H1 (cell line): ENCODE measurements at regions of chr15 and their contacts with region 1.

Region 1: DNA sequence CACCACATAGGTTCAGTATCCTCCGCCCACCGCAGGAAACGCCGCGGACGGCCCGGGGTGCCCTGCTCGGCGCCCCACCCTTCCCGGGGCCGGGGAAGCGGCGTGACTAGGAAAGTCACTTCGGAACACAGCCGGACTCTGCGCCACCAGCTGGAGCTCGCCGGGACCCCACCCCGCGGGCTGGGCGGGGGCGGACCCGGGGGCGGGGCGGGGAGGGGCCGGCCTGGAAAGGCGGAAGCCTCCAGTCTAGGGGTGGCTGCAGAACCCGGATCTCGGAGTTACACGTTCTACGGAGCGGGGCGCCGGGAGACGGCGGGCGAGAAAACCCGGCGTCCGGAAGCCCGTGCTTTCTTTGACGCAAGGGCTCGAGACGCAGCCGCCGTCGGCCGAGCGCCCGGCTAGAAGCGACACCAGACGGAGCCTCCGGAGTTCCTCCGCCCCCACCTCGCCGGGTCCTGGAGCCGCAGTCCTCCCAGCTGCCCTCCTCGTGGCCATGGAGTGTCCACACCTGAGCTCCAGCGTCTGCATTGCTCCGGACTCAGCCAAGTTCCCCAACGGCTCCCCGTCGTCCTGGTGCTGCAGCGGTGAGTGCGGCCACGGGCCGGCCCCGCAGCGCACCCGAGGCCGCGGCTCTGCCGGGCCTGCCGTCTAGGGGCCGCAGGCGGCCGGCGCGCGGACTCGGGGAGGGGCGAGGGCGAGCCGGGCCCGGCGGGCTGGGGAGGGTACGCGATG is at the start of gene USP3:
- DNase-seq: peak; percentile 72 to 98
- H3K4me3 ChIP-seq: peak within 1 kb of the TSS; percentile 53 to 74 (median 62)
- H3K27ac ChIP-seq: peak within 1 kb of the TSS; percentile 35; the same call in 1 of the 2 replicates
- H3K4me1 ChIP-seq: peaks cover 7 to 16% (median 12%) of the 10 kb centered on the region in 4 experiments
- H3K27me3 ChIP-seq: peaks cover 26 to 77% (median 62%) of the 10 kb centered on the region in 4 experiments
- CTCF ChIP-seq: no peak
- EP300 ChIP-seq: peak in 1 of 2 experiments; percentile 88; a peak in 2 of 3 replicates
- POLR2A ChIP-seq: peak; percentile 64 to 74
- RAD21 ChIP-seq: peak in 1 of 2 experiments; percentile 20; a peak in 2 of 4 replicates
- total RNA-seq, gene USP3: 10.8 and 15.5 TPM in 2 replicates

Region 2: DNA sequence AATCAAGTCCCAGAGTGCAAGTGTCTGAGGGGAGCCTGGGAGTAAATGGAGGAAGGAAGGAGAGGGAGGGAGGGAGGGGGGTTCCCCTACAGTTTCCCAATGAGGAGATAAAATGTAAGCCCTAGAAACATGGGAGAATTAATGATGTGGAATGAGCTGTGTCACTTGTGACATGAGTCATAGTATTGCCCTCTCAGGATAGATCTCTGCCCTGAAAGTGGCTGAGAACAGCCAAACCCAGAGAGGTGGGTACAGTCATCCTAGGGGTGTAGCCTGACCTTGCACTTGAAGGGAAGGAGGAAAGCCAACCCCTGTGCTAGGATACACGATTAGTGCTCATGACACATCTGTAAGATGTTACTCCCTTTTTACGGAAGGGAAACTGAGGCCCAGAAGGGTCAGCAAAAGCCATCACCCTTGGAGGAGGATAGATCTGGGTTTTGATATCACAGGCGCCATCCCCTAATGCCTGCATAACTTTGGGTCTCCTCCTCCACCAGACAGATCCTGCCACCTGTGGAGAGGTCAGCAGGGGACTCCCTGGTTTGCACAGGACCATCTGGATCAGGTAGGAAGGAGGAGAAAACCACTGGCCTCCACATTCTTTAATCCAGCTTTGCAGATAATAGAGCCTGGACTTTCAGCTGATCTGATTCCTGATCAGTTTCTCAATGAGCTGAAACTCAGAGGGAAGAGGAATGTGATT is 23.2 kb before region 1 on chr15:
- CTCF ChIA-PET with region 1: interaction called, 20 read pairs
- POLR2A ChIA-PET with region 1: no interaction called
- DNase-seq: no peak
- H3K4me3 ChIP-seq: no peak overlapping the region
- H3K27ac ChIP-seq: no peak overlapping the region
- H3K4me1 ChIP-seq: peaks cover 0 to 3% (median 2%) of the 10 kb centered on the region in 4 experiments; a peak in 5 of 7 replicates
- H3K27me3 ChIP-seq: no peaks in the 10 kb centered on the region
- CTCF ChIP-seq: no peak
- EP300 ChIP-seq: no peak
- POLR2A ChIP-seq: no peak
- RAD21 ChIP-seq: no peak

Region 3: DNA sequence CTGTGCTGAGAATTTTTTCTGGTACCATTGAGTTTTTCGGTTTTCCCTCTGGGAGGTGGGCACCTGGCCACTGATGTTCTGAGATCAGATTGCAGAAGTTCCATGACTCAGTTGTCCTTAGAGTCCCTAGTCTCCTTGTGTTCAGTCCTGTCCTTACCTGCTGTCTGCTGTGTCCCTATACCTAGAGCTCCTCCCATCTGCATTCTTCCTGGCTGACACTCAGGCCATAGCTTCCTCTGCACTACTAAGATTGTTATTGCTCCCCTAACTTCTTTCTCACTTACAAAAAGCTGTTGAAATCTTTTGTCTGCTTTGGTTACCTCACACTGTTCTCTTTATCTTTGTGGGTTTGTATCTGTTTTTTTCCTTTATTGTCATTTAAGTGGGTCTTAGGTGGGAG is 13.2 kb after region 1 on chr15:
- CTCF ChIA-PET with region 1: interaction called, 12 read pairs
- POLR2A ChIA-PET with region 1: interaction called, 4 read pairs
- DNase-seq: no peak
- H3K4me3 ChIP-seq: peak overlapping the region in 1 of 4 experiments; percentile 31; a peak in 1 of 8 replicates
- H3K27ac ChIP-seq: no peak overlapping the region
- H3K4me1 ChIP-seq: peaks cover 0 to 11% (median 4%) of the 10 kb centered on the region in 4 experiments; a peak in 3 of 7 replicates
- H3K27me3 ChIP-seq: peaks cover 0 to 2% (median 0%) of the 10 kb centered on the region in 4 experiments; a peak in 1 of 7 replicates
- CTCF ChIP-seq: no peak
- EP300 ChIP-seq: no peak
- POLR2A ChIP-seq: no peak
- RAD21 ChIP-seq: no peak

Region 4: GRCh38 chr15:63531586-63531985 is 27.2 kb after region 1 on chr15:
- CTCF ChIA-PET with region 1: interaction called, 16 read pairs
- POLR2A ChIA-PET with region 1: interaction called, 4 read pairs
- DNase-seq: no peak
- H3K4me3 ChIP-seq: no peak overlapping the region
- H3K27ac ChIP-seq: no peak overlapping the region
- H3K4me1 ChIP-seq: peaks cover 3 to 11% (median 6%) of the 10 kb centered on the region in 4 experiments; a peak in 6 of 7 replicates
- H3K27me3 ChIP-seq: no peaks in the 10 kb centered on the region
- CTCF ChIP-seq: peak; percentile 51 to 73 (median 69)
- EP300 ChIP-seq: no peak
- POLR2A ChIP-seq: no peak
- RAD21 ChIP-seq: peak; percentile 24 to 56; a peak in 3 of 4 replicates